ENCODE measurements at regions of chr11 and their contacts with region 1.

Region 1: DNA sequence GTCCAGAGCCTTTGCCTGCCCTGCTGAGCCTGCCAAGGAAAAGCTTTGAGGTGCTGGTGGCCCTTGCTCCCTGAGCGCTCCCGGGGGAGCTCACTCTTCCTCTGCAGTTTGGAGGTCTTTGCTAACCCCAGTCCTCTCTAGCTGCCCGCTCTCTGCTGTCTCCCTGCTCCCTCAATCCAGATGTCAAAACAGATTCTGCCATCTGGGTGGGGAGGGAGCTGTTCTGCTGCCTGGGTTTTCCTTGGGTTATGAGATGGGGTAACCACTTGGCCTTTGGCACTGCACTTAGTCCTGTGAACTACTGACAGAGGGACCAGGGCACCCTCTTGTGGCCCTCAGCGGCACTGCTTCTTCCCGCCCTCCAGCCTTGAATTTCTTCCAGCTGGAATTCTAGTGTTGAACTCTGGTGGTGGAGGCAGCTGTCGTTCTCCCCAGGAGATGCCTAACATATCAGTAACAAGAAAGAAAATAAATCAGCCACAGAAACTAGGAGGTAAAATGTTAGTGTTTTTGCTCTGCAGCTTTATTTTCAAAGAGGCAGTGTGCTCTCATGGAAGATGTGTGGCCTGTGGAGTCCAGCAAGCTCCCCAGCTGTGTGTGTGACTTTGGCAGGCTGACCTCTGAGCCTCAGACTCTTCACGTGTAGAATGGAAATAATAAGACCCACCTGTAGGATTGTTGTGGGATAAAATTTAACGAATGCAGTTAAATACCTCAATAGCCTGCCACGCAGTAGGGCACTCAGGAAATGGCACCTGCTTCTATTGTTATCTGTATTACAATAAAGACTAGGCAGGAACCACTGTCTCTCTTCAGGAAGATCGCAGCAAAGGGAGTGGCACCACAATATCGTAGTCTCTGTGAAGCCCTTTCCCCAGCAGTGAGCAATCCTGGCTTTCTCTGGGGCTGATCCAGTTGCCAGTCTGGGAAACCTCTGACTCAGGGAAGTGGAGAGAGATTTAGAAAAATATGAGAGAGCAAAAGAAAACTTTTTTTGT is 23.4 kb downstream of the ARFGAP2 start:
- DNase-seq: peak; percentile 76
- H3K4me3 ChIP-seq: no peak overlapping the region
- H3K27ac ChIP-seq: no peak overlapping the region
- H3K4me1 ChIP-seq: no peaks in the 10 kb centered on the region
- H3K27me3 ChIP-seq: no peaks in the 10 kb centered on the region
- CTCF ChIP-seq: peak; percentile 95 to 96
- POLR2A ChIP-seq: no peak

Region 2: DNA sequence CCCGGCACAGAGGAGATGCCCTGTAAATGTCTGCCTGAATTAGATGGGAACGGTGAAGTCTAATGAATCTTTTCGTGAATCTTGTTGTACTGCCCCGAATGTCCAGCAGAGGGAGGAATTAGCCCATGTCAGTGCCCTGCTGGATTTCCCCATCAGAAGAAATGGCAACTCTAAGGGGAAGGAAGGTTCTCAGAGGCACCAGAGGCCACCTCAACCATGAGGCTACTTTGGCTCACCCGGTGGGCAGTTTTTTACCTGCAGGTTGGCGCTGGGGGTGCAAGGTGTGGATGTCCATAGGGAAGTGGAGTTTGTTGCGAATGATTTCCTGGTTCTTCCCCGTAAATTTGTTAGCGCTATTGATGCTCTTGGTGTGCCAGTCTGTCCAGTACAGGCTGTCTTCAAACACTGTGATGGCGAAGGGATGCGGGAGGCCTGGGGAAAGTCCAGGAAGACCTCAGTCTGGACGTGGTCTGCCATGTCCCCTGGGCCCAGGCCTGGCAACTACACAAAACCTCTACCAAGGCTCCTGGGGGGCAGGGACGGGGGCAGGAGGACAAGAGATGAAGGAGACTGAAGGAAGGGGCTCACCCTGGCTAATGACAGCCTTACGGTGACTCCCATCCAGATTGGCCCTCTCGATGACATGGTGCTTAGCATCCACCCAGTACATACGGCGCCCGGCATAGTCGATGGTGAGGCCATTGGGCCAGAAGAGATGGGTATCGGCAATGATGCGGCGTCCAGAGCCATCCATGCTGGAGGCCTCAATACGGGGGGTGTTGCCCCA is 263.4 kb before region 1 on chr11:
- CTCF ChIA-PET with region 1: interaction called, 120 read pairs
- POLR2A ChIA-PET with region 1: no interaction called
- dilution Hi-C with region 1: no loop called
- intact Hi-C with region 1: loop called (anchors 1 kb)
- DNase-seq: peak; percentile 72
- H3K4me3 ChIP-seq: no peak overlapping the region
- H3K27ac ChIP-seq: no peak overlapping the region
- H3K4me1 ChIP-seq: no peaks in the 10 kb centered on the region
- H3K27me3 ChIP-seq: no peaks in the 10 kb centered on the region
- CTCF ChIP-seq: peak; percentile 75 to 81
- POLR2A ChIP-seq: no peak

Region 3: DNA sequence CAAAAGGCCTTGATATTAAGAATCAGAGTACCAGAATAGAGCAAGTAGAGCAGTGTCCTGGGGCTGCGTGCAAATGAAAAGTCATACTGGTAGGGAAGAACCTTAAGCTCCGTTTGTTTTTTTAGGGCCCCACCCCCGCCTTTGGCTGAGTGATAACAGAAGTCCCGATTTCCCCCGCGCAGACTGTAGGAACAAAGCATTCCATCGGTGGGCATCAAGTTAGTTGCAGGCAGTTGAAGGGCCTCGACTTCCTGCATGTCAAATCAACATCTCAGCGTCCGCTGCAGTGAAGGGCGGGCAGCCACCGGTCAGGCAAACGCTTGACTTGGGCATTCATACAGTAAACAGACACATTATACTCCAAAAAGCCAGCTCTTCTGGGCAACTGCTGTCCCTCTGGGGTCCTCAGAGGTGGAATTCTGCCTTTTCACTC is 246.6 kb before region 1 on chr11:
- CTCF ChIA-PET with region 1: interaction called, 47 read pairs
- POLR2A ChIA-PET with region 1: no interaction called
- dilution Hi-C with region 1: no loop called
- intact Hi-C with region 1: no loop called
- DNase-seq: peak; percentile 58
- H3K4me3 ChIP-seq: no peak overlapping the region
- H3K27ac ChIP-seq: no peak overlapping the region
- H3K4me1 ChIP-seq: peaks cover 9% of the 10 kb centered on the region
- H3K27me3 ChIP-seq: peaks cover 0 to 3% of the 10 kb centered on the region in 2 experiments
- CTCF ChIP-seq: no peak
- POLR2A ChIP-seq: no peak

Region 4: GRCh38 chr11:46916286-46917108 is 236.8 kb before region 1 on chr11:
- CTCF ChIA-PET with region 1: interaction called, 47 read pairs
- POLR2A ChIA-PET with region 1: no interaction called
- dilution Hi-C with region 1: no loop called
- intact Hi-C with region 1: loop called (anchors 1 kb)
- DNase-seq: peak; percentile 57
- H3K4me3 ChIP-seq: peak overlapping the region; percentile 47 to 72 (median 60)
- H3K27ac ChIP-seq: no peak overlapping the region
- H3K4me1 ChIP-seq: peaks cover 19% of the 10 kb centered on the region
- H3K27me3 ChIP-seq: peaks cover 20 to 26% of the 10 kb centered on the region in 2 experiments
- CTCF ChIP-seq: peak in 1 of 2 donors; percentile 25
- POLR2A ChIP-seq: no peak

Region 5: GRCh38 chr11:47130543-47130942 is 22.7 kb before region 1 on chr11:
- CTCF ChIA-PET with region 1: interaction called, 13 read pairs
- POLR2A ChIA-PET with region 1: no interaction called
- dilution Hi-C with region 1: no loop called
- intact Hi-C with region 1: no loop called
- DNase-seq: no peak
- H3K4me3 ChIP-seq: no peak overlapping the region
- H3K27ac ChIP-seq: no peak overlapping the region
- H3K4me1 ChIP-seq: no peaks in the 10 kb centered on the region
- H3K27me3 ChIP-seq: no peaks in the 10 kb centered on the region
- CTCF ChIP-seq: no peak
- POLR2A ChIP-seq: no peak

Region 6: DNA sequence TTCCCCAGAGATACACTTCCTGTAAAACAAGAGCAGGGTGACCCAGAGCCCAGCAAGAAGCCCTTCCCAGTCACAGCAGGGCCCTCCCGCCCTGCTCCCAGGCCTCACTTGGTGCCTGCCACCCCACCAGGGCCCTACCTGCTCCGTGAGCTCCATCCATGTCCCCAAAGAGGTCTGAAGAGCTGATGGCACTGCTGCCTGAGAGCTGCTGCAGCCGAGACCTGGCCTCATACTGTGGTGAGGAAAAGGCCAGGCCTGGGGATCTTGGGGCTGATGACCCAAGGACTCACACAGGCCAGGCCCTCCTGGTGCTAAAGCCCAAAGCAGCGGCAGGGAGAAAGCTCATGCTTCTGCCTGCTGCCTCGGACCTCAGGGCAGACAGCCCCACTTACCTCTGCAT is 13.1 kb after region 1 on chr11:
- CTCF ChIA-PET with region 1: interaction called, 36 read pairs
- POLR2A ChIA-PET with region 1: interaction called, 3 read pairs
- dilution Hi-C with region 1: no loop called
- intact Hi-C with region 1: no loop called
- DNase-seq: no peak
- H3K4me3 ChIP-seq: no peak overlapping the region
- H3K27ac ChIP-seq: no peak overlapping the region
- H3K4me1 ChIP-seq: no peaks in the 10 kb centered on the region
- H3K27me3 ChIP-seq: no peaks in the 10 kb centered on the region
- CTCF ChIP-seq: no peak
- POLR2A ChIP-seq: no peak

Region 7: GRCh38 chr11:48043111-48043990 is 890.1 kb after region 1 on chr11:
- CTCF ChIA-PET with region 1: no interaction called
- POLR2A ChIA-PET with region 1: no interaction called
- dilution Hi-C with region 1: no loop called
- intact Hi-C with region 1: no loop called
- DNase-seq: no peak
- H3K4me3 ChIP-seq: no peak overlapping the region
- H3K27ac ChIP-seq: no peak overlapping the region
- H3K4me1 ChIP-seq: no peaks in the 10 kb centered on the region
- H3K27me3 ChIP-seq: no peaks in the 10 kb centered on the region
- CTCF ChIP-seq: no peak
- POLR2A ChIP-seq: no peak